Adrenal gland (tissue), 19 donors: ENCODE measurements at regions of chr18 and their contacts with region 1.

Region 1: GRCh38 chr18:35949903-35950627 is 22.4 kb upstream of the RMP24 start:
- DNase-seq: peak; percentile 43 to 71 (median 58)
- H3K4me3 ChIP-seq: peak overlapping the region in 2 of 4 donors; percentile 46 to 82
- H3K27ac ChIP-seq: no peak overlapping the region
- H3K4me1 ChIP-seq: peaks cover 4 to 7% of the 10 kb centered on the region in 2 donors
- H3K27me3 ChIP-seq: no peaks in the 10 kb centered on the region
- CTCF ChIP-seq: peak; percentile 76 to 93 (median 90)
- POLR2A ChIP-seq: no peak

Region 2: GRCh38 chr18:35407871-35408481 is 542.1 kb before region 1 on chr18:
- intact Hi-C with region 1: loop called in 1 of 2 experiments (anchors 10 kb)
- DNase-seq: peak; percentile 30 to 74 (median 57)
- H3K4me3 ChIP-seq: no peak overlapping the region
- H3K27ac ChIP-seq: no peak overlapping the region
- H3K4me1 ChIP-seq: no peaks in the 10 kb centered on the region
- H3K27me3 ChIP-seq: no peaks in the 10 kb centered on the region
- CTCF ChIP-seq: peak; percentile 61 to 88 (median 76)
- POLR2A ChIP-seq: no peak

Region 3: DNA sequence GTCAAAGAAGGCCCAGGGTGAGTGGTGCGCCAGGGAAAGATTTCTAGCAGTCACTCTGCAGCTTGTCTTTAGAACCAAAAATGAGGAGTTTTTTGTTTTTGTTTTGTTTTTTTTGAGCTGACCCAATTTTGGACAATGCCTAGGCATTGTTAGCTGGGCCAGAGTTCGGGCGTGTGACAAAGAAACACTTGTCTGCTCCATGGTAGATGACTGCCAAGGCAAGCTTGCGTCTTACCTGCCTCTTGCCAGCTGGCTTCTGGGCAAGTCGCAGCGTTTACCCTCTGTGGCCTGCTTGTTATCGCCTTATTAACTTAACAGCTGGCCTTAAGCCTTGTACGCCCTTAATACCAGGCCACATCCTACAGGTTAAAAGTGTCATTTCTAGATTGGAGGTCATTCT is 254.3 kb before region 1 on chr18:
- intact Hi-C with region 1: no loop called
- DNase-seq: no peak
- H3K4me3 ChIP-seq: no peak overlapping the region
- H3K27ac ChIP-seq: no peak overlapping the region
- H3K4me1 ChIP-seq: no peaks in the 10 kb centered on the region
- H3K27me3 ChIP-seq: no peaks in the 10 kb centered on the region
- CTCF ChIP-seq: no peak
- POLR2A ChIP-seq: no peak

Region 4: GRCh38 chr18:35756506-35757117 is 193.5 kb before region 1 on chr18:
- intact Hi-C with region 1: loop called (anchors 5 to 10 kb)
- DNase-seq: peak; percentile 41 to 76 (median 58)
- H3K4me3 ChIP-seq: no peak overlapping the region
- H3K27ac ChIP-seq: no peak overlapping the region
- H3K4me1 ChIP-seq: no peaks in the 10 kb centered on the region
- H3K27me3 ChIP-seq: peaks cover 4% of the 10 kb centered on the region
- CTCF ChIP-seq: peak; percentile 70 to 87 (median 77)
- POLR2A ChIP-seq: no peak